Mammary epithelial cell (primary cell): ENCODE measurements at regions of chr3 and their contacts with region 1.

Region 1: DNA sequence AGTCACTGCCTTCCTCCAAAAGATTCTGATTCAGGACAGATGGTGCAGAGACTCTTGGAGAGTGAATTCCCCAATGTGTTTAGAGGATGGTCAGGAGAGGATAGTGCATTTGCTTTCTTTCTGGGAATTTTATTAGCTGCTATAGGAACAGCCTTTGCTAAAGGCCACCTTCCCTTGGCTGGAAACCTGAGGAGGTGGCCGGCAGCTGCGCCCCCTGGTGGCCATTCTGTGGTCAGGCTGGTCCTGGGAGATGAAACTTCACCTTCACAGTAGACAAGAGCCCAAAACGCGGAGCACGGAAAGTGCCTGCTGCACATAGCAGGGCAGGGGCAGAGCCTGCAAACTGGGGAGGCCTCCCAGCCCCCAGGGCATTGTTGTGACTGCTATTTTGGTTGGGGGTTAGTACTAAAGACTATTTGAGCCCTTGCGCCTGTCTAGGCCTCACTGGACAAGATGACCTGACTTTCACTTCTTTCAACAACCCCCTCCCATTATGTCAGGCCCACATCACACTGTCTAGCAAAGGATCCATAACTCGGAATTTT is 34.3 kb downstream of the SEC22C start:
- DNase-seq: peak; percentile 36
- H3K4me3 ChIP-seq: no peak overlapping the region
- H3K27ac ChIP-seq: no peak overlapping the region
- H3K4me1 ChIP-seq: no peaks in the 10 kb centered on the region
- H3K27me3 ChIP-seq: no peaks in the 10 kb centered on the region
- CTCF ChIP-seq: peak; percentile 94 to 98

Region 2: DNA sequence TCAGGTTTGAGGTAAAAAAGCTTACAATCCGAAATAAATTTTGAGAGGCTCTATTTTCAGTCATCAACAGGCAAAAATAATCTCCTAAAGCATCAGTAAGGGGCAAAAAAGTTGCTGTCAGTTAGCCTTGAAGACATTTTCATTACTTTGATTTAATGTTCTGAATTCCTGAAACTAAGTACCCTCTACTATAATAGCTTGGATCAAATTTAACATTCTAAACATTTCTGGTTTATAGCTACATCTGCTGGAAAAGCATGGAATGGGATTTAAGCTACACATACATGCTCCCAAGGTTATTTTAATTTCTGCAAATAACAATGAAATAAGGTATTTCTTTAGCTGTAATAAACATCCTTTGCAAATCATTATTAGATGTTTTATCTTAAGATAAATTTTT is 831.0 kb before region 1 on chr3:
- CTCF ChIA-PET with region 1: no interaction called
- dilution Hi-C with region 1: no loop called
- in situ Hi-C with region 1: no loop called
- intact Hi-C with region 1: no loop called
- DNase-seq: no peak
- H3K4me3 ChIP-seq: no peak overlapping the region
- H3K27ac ChIP-seq: no peak overlapping the region
- H3K4me1 ChIP-seq: no peaks in the 10 kb centered on the region
- H3K27me3 ChIP-seq: no peaks in the 10 kb centered on the region
- CTCF ChIP-seq: peak; percentile 36 to 56

Region 3: GRCh38 chr3:41893977-41894376 is 653.5 kb before region 1 on chr3:
- CTCF ChIA-PET with region 1: no interaction called
- dilution Hi-C with region 1: no loop called
- in situ Hi-C with region 1: no loop called
- intact Hi-C with region 1: loop called (anchors 10 kb)
- DNase-seq: peak; percentile 36
- H3K4me3 ChIP-seq: no peak overlapping the region
- H3K27ac ChIP-seq: no peak overlapping the region
- H3K4me1 ChIP-seq: no peaks in the 10 kb centered on the region
- H3K27me3 ChIP-seq: no peaks in the 10 kb centered on the region
- CTCF ChIP-seq: peak; percentile 29 to 54

Region 4: GRCh38 chr3:42067326-42067725 is 480.1 kb before region 1 on chr3:
- CTCF ChIA-PET with region 1: no interaction called
- dilution Hi-C with region 1: no loop called
- in situ Hi-C with region 1: no loop called
- intact Hi-C with region 1: no loop called
- DNase-seq: no peak
- H3K4me3 ChIP-seq: no peak overlapping the region
- H3K27ac ChIP-seq: peak overlapping the region; percentile 37
- H3K4me1 ChIP-seq: peaks cover 40% of the 10 kb centered on the region
- H3K27me3 ChIP-seq: no peaks in the 10 kb centered on the region
- CTCF ChIP-seq: no peak

Region 5: GRCh38 chr3:42247576-42248027 is 299.9 kb before region 1 on chr3:
- CTCF ChIA-PET with region 1: interaction called, 3 read pairs
- dilution Hi-C with region 1: no loop called
- in situ Hi-C with region 1: loop called in 1 of 2 experiments (anchors 25 kb)
- intact Hi-C with region 1: no loop called
- DNase-seq: peak; percentile 50
- H3K4me3 ChIP-seq: no peak overlapping the region
- H3K27ac ChIP-seq: no peak overlapping the region
- H3K4me1 ChIP-seq: peaks cover 6% of the 10 kb centered on the region
- H3K27me3 ChIP-seq: no peaks in the 10 kb centered on the region
- CTCF ChIP-seq: peak; percentile 70 to 74

Region 6: DNA sequence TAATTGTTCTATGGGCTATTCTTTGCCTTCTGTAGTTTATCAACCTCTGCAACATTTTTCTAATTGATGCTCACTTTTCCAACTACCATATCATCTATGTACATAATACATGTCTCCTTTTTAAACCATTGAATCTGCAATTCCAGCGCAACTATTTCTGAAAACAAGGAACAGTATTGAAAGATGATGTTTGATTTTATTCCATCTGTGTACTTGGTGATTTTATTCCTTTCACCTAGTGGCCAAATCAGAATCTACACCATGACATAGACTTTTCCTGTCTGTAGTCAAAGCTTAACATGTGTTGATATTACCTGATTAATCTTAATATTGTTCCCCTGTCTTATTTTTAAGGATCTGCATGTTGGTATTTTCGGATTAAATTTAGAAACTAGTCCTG is 66.0 kb after region 1 on chr3:
- CTCF ChIA-PET with region 1: no interaction called
- dilution Hi-C with region 1: no loop called
- in situ Hi-C with region 1: no loop called
- intact Hi-C with region 1: no loop called
- DNase-seq: no peak
- H3K4me3 ChIP-seq: no peak overlapping the region
- H3K27ac ChIP-seq: peak overlapping the region; percentile 40
- H3K4me1 ChIP-seq: no peaks in the 10 kb centered on the region
- H3K27me3 ChIP-seq: no peaks in the 10 kb centered on the region
- CTCF ChIP-seq: peak; percentile 41 to 51